Ascending aorta (tissue), 2 donors: ENCODE measurements at regions of chr15 and their contacts with region 1.

Region 1: GRCh38 chr15:40344631-40345120 is 3.9 kb upstream of the CCDC9B start:
- DNase-seq: no peak
- H3K4me3 ChIP-seq: no peak overlapping the region
- H3K27ac ChIP-seq: peak overlapping the region; percentile 98 to 99
- H3K4me1 ChIP-seq: peaks cover 20 to 45% of the 10 kb centered on the region in 2 donors
- H3K27me3 ChIP-seq: no peaks in the 10 kb centered on the region
- CTCF ChIP-seq: peak; percentile 69 to 87 (median 80)

Region 2: GRCh38 chr15:40357723-40358470 is 13.2 kb after region 1 on chr15 and contains the start of gene DISP2:
- intact Hi-C with region 1: loop called (anchors 1 kb)
- DNase-seq: peak in 1 of 2 donors; percentile 93
- H3K4me3 ChIP-seq: peak within 1 kb of the TSS; percentile 45 to 73
- H3K27ac ChIP-seq: no peak within 1 kb of the TSS
- H3K4me1 ChIP-seq: peaks cover 7 to 9% of the 10 kb centered on the region in 2 donors
- H3K27me3 ChIP-seq: no peaks in the 10 kb centered on the region
- CTCF ChIP-seq: no peak
- total RNA-seq, gene DISP2: 0.32 TPM

Region 3: DNA sequence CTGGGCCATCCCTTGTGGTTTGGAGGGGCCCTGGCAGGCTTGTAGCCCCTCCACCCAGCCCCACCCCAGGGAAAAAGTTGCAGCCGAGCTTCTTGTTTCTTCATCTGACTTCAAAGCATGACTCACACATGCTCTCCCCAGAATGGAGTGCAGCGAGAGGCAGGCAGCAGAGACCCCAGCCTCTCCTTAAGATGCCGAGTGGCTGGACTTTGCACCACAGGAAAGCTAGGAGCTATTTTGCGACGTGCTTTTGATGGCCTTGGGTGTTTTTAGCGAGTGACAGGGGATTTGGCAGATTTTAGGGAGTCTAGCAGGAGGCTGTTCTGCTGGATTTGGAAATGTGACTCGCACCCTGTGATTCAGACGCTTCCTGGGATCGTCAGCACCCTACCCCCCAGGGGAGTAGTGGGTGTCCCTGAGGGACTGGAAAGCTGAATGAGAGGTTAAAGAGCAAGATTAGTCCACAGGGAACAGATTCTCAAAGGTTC is 110.3 kb after region 1 on chr15:
- intact Hi-C with region 1: no loop called
- DNase-seq: no peak
- H3K4me3 ChIP-seq: no peak overlapping the region
- H3K27ac ChIP-seq: no peak overlapping the region
- H3K4me1 ChIP-seq: peaks cover 4 to 15% of the 10 kb centered on the region in 2 donors
- H3K27me3 ChIP-seq: no peaks in the 10 kb centered on the region
- CTCF ChIP-seq: no peak